Dorsolateral prefrontal cortex (tissue), 120 donors: ENCODE measurements at regions of chr5 and their contacts with region 1.

Region 1: GRCh38 chr5:146203011-146203871 is at the start of gene RBM27:
- DNase-seq: peak; percentile 87 to 99 (median 97)
- H3K4me3 ChIP-seq: peak within 1 kb of the TSS; percentile 46 to 97 (median 85)
- H3K27ac ChIP-seq: peak within 1 kb of the TSS; percentile 28 to 96 (median 86)
- H3K27me3 ChIP-seq: no peaks in the 10 kb centered on the region
- CTCF ChIP-seq: peak in 25 of 56 donors; percentile 6 to 53 (median 24)
- total RNA-seq, gene RBM27: 9.9 to 34.8 (median 17.5) TPM

Region 2: DNA sequence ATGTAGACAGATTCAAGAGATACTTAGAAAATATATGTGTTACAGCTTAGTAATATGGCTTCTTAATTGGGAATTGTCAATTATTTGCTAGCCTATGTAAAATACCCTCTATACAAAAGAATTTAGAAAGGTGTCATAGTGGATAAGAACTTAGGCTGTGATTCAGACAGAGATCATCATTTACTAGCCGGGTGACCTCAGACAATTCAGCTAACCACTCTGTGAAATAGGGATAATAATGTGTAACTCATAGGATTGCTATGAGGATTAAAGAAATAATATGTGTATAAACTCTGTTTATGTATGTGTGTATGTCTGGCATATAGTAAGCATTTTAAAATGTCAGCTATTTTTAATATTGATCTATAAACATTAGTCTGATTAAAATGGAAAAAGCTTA is 14.9 kb before region 1 on chr5:
- intact Hi-C with region 1: loop called in 1 of 2 experiments (anchors 2 kb)
- DNase-seq: no peak
- H3K4me3 ChIP-seq: no peak overlapping the region
- H3K27ac ChIP-seq: no peak overlapping the region
- H3K27me3 ChIP-seq: peaks cover 0 to 6% (median 0%) of the 10 kb centered on the region in 45 donors
- CTCF ChIP-seq: no peak

Region 3: GRCh38 chr5:146446853-146447733 is 243.9 kb after region 1 on chr5 and contains the start of gene TCERG1:
- intact Hi-C with region 1: loop called in 1 of 2 experiments (anchors 10 kb)
- DNase-seq: peak; percentile 93 to 99 (median 98)
- H3K4me3 ChIP-seq: peak within 1 kb of the TSS; percentile 71 to 100 (median 99)
- H3K27ac ChIP-seq: peak within 1 kb of the TSS in 57 of 59 donors; percentile 43 to 95 (median 87)
- H3K27me3 ChIP-seq: no peaks in the 10 kb centered on the region
- CTCF ChIP-seq: peak; percentile 77 to 97 (median 90)
- total RNA-seq, gene TCERG1: 45.6 to 128 (median 84.2) TPM

Region 4: GRCh38 chr5:146458894-146459293 is 255.7 kb after region 1 on chr5:
- intact Hi-C with region 1: no loop called
- DNase-seq: no peak
- H3K4me3 ChIP-seq: no peak overlapping the region
- H3K27ac ChIP-seq: no peak overlapping the region
- H3K27me3 ChIP-seq: no peaks in the 10 kb centered on the region
- CTCF ChIP-seq: no peak